ENCODE measurements at regions of chr16 and their contacts with region 1.

Region 1: DNA sequence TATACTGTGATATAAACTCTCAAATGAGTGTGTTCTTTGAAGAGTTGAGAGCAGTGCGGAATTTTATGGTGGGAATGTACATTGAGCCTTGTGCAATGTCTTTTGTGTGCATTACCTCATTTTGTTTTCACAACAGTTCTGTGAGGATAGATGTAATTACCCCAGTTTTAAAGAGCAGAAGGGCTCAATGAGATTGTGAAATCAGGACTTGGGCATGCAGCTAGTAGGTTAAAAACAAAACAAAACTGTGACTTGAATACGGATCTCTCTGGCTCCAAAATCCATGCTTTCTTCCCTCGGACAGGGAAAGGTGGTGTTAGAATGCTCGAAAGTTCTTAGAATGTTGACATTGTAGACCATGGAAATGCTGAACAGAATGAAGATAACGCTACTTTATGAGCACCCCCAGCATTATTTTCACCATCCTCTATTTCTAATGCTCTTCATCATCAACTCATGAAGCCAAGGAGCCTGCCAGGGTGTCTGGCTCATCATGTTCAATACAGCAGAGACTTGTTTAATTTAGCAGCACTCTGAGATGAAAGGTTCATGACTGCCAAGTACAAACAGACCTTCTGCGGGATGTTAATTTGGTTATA is 17.1 kb downstream of the MRTFB start:
- DNase-seq: no peak
- H3K4me3 ChIP-seq: peak overlapping the region; percentile 15 to 32 (median 30)
- H3K27ac ChIP-seq: peak overlapping the region; percentile 61 to 72 (median 68)
- H3K4me1 ChIP-seq: peaks cover 46 to 87% (median 84%) of the 10 kb centered on the region in 4 donors
- H3K27me3 ChIP-seq: no peaks in the 10 kb centered on the region
- CTCF ChIP-seq: no peak
- EP300 ChIP-seq: no peak
- POLR2A ChIP-seq: no peak

Region 2: GRCh38 chr16:14186007-14186794 is 97.9 kb after region 1 on chr16:
- intact Hi-C with region 1: loop called (anchors 5 kb)
- DNase-seq: no peak
- H3K4me3 ChIP-seq: peak overlapping the region; percentile 46 to 60 (median 48)
- H3K27ac ChIP-seq: peak overlapping the region; percentile 57 to 72 (median 70)
- H3K4me1 ChIP-seq: peaks cover 25 to 73% (median 51%) of the 10 kb centered on the region in 4 donors
- H3K27me3 ChIP-seq: no peaks in the 10 kb centered on the region
- CTCF ChIP-seq: peak; percentile 45 to 76 (median 46)
- EP300 ChIP-seq: no peak
- POLR2A ChIP-seq: no peak

Region 3: DNA sequence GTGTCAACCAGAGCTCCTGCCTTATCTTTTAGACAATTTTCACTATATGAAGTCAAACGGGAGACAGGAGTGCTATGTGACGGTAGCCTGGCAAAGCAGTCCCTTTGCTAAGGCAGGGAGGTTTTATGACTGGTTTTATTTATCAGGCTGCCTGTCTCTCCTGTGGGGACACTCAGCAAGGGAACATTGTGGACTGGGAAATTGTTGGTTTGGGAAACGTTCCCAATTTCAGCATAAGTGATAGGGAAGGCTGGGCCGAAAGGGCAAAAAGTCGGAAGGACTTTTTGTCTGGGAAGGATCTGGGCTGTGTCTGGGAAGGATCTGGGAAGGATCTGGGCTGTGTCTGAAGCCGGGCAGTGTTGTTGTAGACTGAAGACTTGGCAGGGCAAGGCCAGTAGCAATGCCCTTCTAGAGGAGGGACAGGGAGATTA is 330.6 kb after region 1 on chr16:
- intact Hi-C with region 1: no loop called
- DNase-seq: no peak
- H3K4me3 ChIP-seq: no peak overlapping the region
- H3K27ac ChIP-seq: peak overlapping the region in 1 of 4 donors; percentile 65
- H3K4me1 ChIP-seq: peaks cover 0 to 18% (median 8%) of the 10 kb centered on the region in 4 donors
- H3K27me3 ChIP-seq: no peaks in the 10 kb centered on the region
- CTCF ChIP-seq: no peak
- EP300 ChIP-seq: no peak
- POLR2A ChIP-seq: no peak